CD14-positive monocyte (primary cell): ENCODE measurements at regions of chr6 and their contacts with region 1.

Region 1: DNA sequence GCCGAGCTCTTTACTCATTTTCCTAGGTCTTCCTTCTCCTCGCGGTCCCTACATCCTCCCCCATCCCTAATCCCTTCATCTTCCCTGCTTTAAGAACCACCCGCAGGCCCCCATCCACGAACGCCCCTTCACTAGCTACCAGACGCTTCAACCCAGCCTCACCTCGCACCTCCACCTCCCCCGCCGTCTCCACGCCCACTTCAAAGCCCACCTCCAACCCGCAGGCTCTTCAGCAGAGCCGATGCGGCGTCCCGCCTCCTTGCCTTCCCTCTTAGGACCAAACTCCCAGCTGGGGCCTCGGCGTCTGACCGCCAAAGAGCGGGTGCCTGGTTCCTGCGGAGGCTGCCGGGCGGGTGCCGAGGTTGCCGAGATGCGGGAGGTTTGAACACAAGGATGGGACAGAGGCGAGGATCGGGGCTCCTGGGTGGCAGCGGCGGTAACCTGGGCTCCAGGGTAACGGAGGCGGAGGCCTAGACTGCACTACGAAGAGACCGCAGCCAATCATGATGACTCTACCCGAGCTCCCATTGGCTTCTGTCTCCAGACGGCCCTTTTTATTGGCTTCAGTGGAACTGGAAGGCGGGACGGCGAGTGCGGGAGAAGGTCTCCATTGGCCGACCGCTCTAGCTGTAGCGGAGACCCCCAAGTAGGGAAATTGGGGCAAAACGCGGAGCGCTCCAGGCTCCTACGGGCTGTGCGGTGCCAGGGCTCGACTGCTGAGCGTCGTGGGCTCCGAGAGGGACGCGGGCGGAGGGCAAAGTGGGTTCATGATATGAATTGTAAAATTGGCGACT is at the start of gene LCA5:
- DNase-seq: peak; percentile 77 to 93 (median 86)
- H3K4me3 ChIP-seq: peak within 1 kb of the TSS; percentile 55 to 94 (median 63)
- H3K4me3 Mint-ChIP-seq: no peak within 1 kb of the TSS
- H3K27ac ChIP-seq: peak within 1 kb of the TSS; percentile 13 to 71
- H3K27ac Mint-ChIP-seq: no peak within 1 kb of the TSS
- H3K4me1 ChIP-seq: peaks cover 10 to 23% of the 10 kb centered on the region in 2 donors
- H3K4me1 Mint-ChIP-seq: no peaks in the 10 kb centered on the region
- H3K27me3 ChIP-seq: peaks cover 0 to 8% of the 10 kb centered on the region in 2 donors
- H3K27me3 Mint-ChIP-seq: peaks cover 3 to 8% (median 6%) of the 10 kb centered on the region in 3 donors
- CTCF ChIP-seq: no peak
- polyA plus RNA-seq, gene LCA5: 0.08 TPM in 1 of 3 donors, not detected in the others

Region 2: DNA sequence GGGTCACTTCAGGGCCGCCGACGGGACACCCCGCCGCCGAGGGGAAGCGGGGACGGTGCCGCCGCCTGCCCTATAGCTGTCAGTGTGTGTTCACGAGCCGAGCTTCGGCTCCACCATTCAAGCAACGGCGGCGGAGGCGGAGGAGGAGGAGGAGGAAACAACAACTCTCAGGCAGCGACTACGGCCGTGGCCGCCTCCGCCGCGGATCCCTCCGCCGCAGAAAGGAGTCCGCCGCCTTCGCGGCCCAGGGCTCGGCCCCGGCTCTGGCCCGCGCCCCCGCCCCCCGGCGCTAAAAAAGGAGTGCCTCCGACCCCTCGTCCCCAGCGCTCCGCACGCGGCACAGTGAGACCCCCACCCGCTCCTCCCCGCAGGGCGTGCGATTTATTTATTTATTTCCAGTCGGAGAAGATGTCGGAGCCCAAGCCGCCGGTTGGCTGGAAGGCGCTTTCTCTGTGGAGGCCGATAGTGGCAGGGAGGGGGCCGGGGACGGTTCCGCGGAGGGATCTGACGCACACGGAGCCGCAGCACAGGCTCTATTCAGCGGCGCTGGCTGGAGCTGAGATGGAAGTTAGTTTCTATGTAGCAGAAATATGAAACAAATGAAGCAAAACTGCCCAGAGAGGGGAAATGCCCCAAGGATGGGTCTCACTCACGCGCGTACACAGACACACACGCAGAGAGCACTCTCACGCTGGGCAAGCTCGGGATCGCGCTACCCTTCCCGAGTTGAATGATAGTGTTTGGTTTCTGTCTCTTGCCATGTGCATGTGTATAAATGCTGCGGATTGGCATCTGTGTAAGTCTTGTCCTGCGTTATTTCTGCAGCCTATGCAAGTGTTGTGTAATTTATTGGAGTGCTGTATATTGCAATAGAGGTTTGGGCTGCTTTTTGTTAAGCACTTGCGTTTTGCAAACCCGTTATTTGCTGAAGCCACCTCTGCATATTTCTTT is 458.8 kb before region 1 on chr6 and contains the start of gene PHIP:
- intact Hi-C with region 1: loop called in 1 of 2 experiments (anchors 10 kb)
- DNase-seq: peak; percentile 90 to 98 (median 94)
- H3K4me3 ChIP-seq: peak within 1 kb of the TSS; percentile 82 to 90 (median 84)
- H3K4me3 Mint-ChIP-seq: peak within 1 kb of the TSS; percentile 88 to 95
- H3K27ac ChIP-seq: peak within 1 kb of the TSS; percentile 92 to 96
- H3K27ac Mint-ChIP-seq: peak within 1 kb of the TSS; percentile 89 to 96 (median 95)
- H3K4me1 ChIP-seq: peaks cover 12 to 33% of the 10 kb centered on the region in 2 donors
- H3K4me1 Mint-ChIP-seq: peaks cover 36% of the 10 kb centered on the region
- H3K27me3 ChIP-seq: no peaks in the 10 kb centered on the region
- H3K27me3 Mint-ChIP-seq: no peaks in the 10 kb centered on the region
- CTCF ChIP-seq: no peak
- polyA plus RNA-seq, gene PHIP: 3.2 to 10.8 (median 5.1) TPM

Region 3: DNA sequence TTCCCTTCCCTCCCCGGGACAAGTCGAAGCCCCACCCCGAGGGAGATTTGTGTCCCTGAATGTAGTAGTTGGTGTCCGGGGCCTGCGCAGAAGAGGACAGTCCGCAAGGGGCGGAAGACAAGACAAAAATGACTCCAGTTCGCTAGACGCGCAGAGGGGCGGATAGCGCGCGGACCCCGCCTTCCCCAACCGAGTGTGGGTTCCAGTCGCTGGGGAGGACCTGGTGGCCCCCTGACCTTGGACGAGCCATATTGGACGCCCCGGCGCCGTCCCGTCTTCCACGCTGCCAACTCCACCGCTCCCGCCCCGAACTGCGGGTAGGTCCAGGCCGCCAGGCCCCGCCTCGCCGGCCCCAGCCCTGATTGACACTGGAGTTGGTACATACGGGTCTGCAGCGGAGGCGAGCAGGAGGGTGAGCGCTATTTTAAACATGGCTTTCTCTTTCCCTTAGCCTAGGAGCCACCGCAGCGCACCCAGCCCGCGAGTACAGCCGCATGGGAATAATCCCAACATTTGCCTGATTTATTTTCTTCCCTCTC is 303.5 kb before region 1 on chr6:
- intact Hi-C with region 1: loop called in 1 of 2 experiments (anchors 5 kb)
- DNase-seq: peak; percentile 57 to 62 (median 60)
- H3K4me3 ChIP-seq: peak overlapping the region; percentile 92 to 95 (median 95)
- H3K4me3 Mint-ChIP-seq: peak overlapping the region; percentile 98 to 99
- H3K27ac ChIP-seq: peak overlapping the region; percentile 85 to 92
- H3K27ac Mint-ChIP-seq: peak overlapping the region; percentile 88 to 97 (median 93)
- H3K4me1 ChIP-seq: peaks cover 11 to 16% of the 10 kb centered on the region in 2 donors
- H3K4me1 Mint-ChIP-seq: peaks cover 24% of the 10 kb centered on the region
- H3K27me3 ChIP-seq: no peaks in the 10 kb centered on the region
- H3K27me3 Mint-ChIP-seq: no peaks in the 10 kb centered on the region
- CTCF ChIP-seq: peak; percentile 27

Region 4: GRCh38 chr6:79737172-79737571 is 200.0 kb after region 1 on chr6:
- intact Hi-C with region 1: no loop called
- DNase-seq: no peak
- H3K4me3 ChIP-seq: no peak overlapping the region
- H3K4me3 Mint-ChIP-seq: no peak overlapping the region
- H3K27ac ChIP-seq: no peak overlapping the region
- H3K27ac Mint-ChIP-seq: no peak overlapping the region
- H3K4me1 ChIP-seq: no peaks in the 10 kb centered on the region
- H3K4me1 Mint-ChIP-seq: no peaks in the 10 kb centered on the region
- H3K27me3 ChIP-seq: no peaks in the 10 kb centered on the region
- H3K27me3 Mint-ChIP-seq: no peaks in the 10 kb centered on the region
- CTCF ChIP-seq: no peak